A673 (cell line): ENCODE measurements at regions of chr17 and their contacts with region 1.

Region 1: DNA sequence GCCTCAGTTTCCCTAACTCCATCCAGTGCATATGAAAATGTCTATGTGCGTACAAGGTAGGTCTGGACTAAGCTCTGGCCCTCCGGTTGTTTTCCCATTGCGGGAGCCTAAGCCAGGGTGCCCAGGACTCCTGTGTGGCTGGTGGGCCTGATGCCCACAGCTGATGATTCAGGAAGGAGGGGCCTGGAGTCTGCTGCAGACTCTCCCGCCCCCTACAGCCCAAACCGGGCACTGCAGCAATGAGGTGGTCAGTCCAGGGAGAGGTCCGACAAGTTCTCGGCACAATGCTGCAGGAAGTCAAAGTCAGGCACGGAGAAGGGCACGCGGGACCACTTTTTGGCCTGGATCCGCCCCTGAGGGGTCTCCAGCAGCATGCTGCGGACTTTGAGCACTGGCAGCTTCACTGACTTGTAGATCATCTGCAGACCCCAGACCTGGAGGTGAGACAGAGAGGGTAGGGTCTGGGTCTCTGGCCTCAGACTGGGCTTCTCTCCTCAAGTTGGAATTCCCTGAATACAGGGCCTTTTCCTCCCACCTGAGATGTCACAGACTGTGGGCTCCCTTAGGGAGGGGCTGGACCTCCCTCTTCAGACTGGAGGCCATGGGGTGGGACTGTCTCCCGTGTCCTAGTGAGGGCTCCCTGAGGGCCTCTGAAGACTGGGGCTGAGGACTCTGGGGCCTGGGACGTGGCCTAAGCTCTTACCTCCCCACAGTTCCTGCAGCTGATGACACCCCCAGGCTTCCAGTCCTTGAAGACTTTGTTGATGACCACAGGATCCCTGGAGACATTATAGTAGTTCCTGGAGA is 3.4 kb upstream of the ZNF385C start:
- DNase-seq: peak; percentile 56
- H3K4me3 ChIP-seq: no peak overlapping the region
- H3K27ac ChIP-seq: no peak overlapping the region
- H3K4me1 ChIP-seq: no peaks in the 10 kb centered on the region
- H3K27me3 ChIP-seq: no peaks in the 10 kb centered on the region
- CTCF ChIP-seq: peak; percentile 72

Region 2: DNA sequence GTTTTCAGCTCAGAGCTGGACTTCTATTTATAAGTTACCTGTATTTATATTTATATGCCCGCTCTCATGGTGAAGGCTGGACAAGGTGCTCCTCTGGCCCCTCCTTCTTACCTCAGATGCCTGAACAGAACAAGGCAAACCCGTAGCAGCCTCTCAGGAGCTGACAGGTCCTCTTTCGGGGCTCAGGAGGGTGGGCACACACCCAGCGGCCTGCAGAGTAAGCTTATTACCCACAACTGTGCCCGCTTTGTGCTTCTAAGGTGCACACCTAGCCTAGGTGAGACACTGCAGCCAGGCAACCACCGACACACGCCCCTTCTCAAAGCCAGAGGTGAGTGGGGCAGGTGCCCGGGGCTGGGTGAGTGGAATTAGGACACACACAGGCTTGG is 76.5 kb before region 1 on chr17:
- CTCF ChIA-PET with region 1: interaction called, 5 read pairs
- POLR2A ChIA-PET with region 1: no interaction called
- intact Hi-C with region 1: loop called (anchors 1 kb)
- DNase-seq: no peak
- H3K4me3 ChIP-seq: no peak overlapping the region
- H3K27ac ChIP-seq: no peak overlapping the region
- H3K4me1 ChIP-seq: no peaks in the 10 kb centered on the region
- H3K27me3 ChIP-seq: no peaks in the 10 kb centered on the region
- CTCF ChIP-seq: no peak